Common myeloid progenitor, CD34-positive (primary cell): ENCODE measurements at regions of chr17 and their contacts with region 1.

Region 1: GRCh38 chr17:28405632-28406472 is at the start of gene SLC46A1:
- DNase-seq: peak in 2 of 3 donors; percentile 44 to 50
- H3K4me3 ChIP-seq: peak within 1 kb of the TSS; percentile 50 to 84 (median 66)
- H3K27ac ChIP-seq: no peak within 1 kb of the TSS
- H3K4me1 ChIP-seq: peaks cover 0 to 40% (median 32%) of the 10 kb centered on the region in 4 experiments
- H3K27me3 ChIP-seq: no peaks in the 10 kb centered on the region

Region 2: GRCh38 chr17:28416703-28417311 is 11.0 kb after region 1 on chr17:
- CTCF ChIA-PET with region 1: interaction called, 14 read pairs
- POLR2A ChIA-PET with region 1: no interaction called
- DNase-seq: peak; percentile 67 to 76 (median 74)
- H3K4me3 ChIP-seq: no peak overlapping the region
- H3K27ac ChIP-seq: no peak overlapping the region
- H3K4me1 ChIP-seq: no peaks in the 10 kb centered on the region
- H3K27me3 ChIP-seq: peaks cover 0 to 6% (median 0%) of the 10 kb centered on the region in 5 experiments